ENCODE measurements at regions of chr19 and their contacts with region 1.

Region 1: GRCh38 chr19:54266133-54266532 is 9.1 kb upstream of the LILRB5 start:
- DNase-seq: peak; percentile 84
- H3K4me3 Mint-ChIP-seq: no peak overlapping the region
- H3K27ac Mint-ChIP-seq: no peak overlapping the region
- H3K4me1 Mint-ChIP-seq: no peaks in the 10 kb centered on the region
- H3K27me3 Mint-ChIP-seq: peaks cover 29% of the 10 kb centered on the region

Region 2: GRCh38 chr19:54168174-54168917 is 97.8 kb before region 1 on chr19:
- CTCF ChIA-PET with region 1: interaction called, 10 read pairs
- POLR2A ChIA-PET with region 1: interaction called, 3 read pairs
- intact Hi-C with region 1: no loop called
- DNase-seq: peak; percentile 94
- H3K4me3 Mint-ChIP-seq: peak overlapping the region; percentile 5
- H3K27ac Mint-ChIP-seq: no peak overlapping the region
- H3K4me1 Mint-ChIP-seq: peaks cover 8% of the 10 kb centered on the region
- H3K27me3 Mint-ChIP-seq: no peaks in the 10 kb centered on the region

Region 3: DNA sequence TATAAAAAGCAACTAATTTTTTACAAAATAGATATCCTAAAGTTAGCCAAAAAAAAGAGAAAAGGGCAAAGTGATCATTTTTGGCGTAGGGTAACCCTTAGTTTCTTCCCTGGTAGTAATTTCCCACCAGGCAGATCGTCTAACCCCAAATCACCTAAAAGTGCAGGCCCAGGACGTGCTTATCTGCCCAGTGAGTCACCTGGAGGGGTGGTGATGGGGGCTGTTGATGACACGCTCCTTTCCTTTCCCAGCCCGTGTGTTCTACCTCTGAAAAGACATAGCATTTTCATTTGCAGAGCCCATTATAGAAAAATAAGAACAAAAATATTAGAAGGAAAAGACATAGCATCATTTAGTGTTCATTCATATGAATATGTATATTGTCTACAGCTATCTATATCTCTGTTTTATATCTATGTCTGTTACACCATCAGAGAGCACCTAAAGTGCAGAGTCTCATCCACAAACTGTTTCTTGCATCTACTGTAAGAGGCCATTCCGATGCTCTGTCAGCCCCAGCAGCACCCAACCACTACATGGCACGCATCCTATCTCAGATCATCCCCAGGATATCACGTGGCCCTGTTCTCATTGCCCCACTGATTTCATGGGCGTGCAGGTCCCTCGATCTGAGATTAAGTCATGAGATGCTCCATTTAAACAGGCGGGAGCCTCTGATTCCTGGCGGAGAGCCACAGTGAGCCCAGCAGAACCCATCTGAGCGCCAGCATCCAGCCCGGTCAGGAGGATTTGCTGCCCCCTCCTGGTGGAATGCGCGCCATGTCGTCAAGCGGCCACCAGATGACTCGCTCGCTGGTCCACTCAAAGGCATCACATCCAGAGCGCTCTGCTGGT is 34.8 kb before region 1 on chr19:
- CTCF ChIA-PET with region 1: interaction called, 14 read pairs
- POLR2A ChIA-PET with region 1: no interaction called
- intact Hi-C with region 1: no loop called
- DNase-seq: peak; percentile 90
- H3K4me3 Mint-ChIP-seq: no peak overlapping the region
- H3K27ac Mint-ChIP-seq: no peak overlapping the region
- H3K4me1 Mint-ChIP-seq: peaks cover 8% of the 10 kb centered on the region
- H3K27me3 Mint-ChIP-seq: peaks cover 24% of the 10 kb centered on the region

Region 4: GRCh38 chr19:54357381-54357780 is 91.2 kb after region 1 on chr19:
- CTCF ChIA-PET with region 1: interaction called, 10 read pairs
- POLR2A ChIA-PET with region 1: no interaction called
- intact Hi-C with region 1: no loop called
- DNase-seq: no peak
- H3K4me3 Mint-ChIP-seq: no peak overlapping the region
- H3K27ac Mint-ChIP-seq: no peak overlapping the region
- H3K4me1 Mint-ChIP-seq: peaks cover 21% of the 10 kb centered on the region
- H3K27me3 Mint-ChIP-seq: no peaks in the 10 kb centered on the region